ENCODE measurements at regions of chr6 and their contacts with region 1.

Region 1: GRCh38 chr6:132279592-132280139 is 121.6 kb downstream of the MOXD1 start:
- DNase-seq: no peak
- H3K4me3 ChIP-seq: peak overlapping the region; percentile 56
- CTCF ChIP-seq: peak; percentile 62

Region 2: GRCh38 chr6:131923356-131923755 is 356.3 kb before region 1 on chr6:
- CTCF ChIA-PET with region 1: interaction called, 166 read pairs
- POLR2A ChIA-PET with region 1: no interaction called
- DNase-seq: no peak
- H3K4me3 ChIP-seq: no peak overlapping the region
- CTCF ChIP-seq: peak; percentile 48

Region 3: DNA sequence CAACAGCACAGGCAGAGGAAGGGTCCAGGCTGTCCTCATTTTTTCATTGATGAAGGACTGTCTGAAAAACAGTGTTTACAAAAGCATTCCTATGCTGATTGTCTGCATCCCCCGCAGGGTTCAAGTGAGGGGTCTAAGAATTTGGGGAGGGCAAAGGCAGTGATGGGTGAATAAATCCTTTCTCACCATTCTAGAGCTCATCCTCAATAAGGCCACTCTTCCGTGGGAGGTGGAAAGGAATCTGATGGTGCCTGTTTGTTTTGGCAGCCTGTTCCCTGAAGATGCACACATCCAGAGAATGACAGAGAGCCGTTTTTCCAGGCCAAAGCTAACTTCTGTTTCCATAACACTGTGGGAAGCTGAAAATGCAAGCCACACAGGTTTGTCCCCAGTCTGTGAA is 42.9 kb before region 1 on chr6:
- CTCF ChIA-PET with region 1: interaction called, 35 read pairs
- POLR2A ChIA-PET with region 1: no interaction called
- DNase-seq: no peak
- H3K4me3 ChIP-seq: no peak overlapping the region
- CTCF ChIP-seq: no peak

Region 4: DNA sequence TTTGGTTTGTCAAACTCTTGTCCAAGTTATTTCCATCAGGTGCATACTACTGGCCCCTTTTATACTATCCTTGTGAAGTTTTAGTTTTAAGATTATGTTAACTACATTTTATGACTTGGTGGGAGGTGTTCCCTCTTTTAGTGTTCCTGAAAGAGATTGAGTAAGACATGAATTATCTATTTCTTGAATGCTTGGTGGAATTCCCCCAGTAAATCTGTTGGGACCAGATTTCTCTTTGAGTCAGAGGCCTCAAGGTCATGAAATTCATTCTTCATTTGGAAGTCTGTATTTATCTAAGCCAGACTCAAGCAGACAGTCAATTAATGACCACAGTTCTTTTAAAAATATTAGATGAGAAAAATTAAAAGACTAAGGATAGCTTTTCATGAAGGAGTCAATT is 40.3 kb after region 1 on chr6:
- CTCF ChIA-PET with region 1: interaction called, 20 read pairs
- POLR2A ChIA-PET with region 1: no interaction called
- DNase-seq: peak; percentile 52
- H3K4me3 ChIP-seq: no peak overlapping the region
- CTCF ChIP-seq: no peak

Region 5: DNA sequence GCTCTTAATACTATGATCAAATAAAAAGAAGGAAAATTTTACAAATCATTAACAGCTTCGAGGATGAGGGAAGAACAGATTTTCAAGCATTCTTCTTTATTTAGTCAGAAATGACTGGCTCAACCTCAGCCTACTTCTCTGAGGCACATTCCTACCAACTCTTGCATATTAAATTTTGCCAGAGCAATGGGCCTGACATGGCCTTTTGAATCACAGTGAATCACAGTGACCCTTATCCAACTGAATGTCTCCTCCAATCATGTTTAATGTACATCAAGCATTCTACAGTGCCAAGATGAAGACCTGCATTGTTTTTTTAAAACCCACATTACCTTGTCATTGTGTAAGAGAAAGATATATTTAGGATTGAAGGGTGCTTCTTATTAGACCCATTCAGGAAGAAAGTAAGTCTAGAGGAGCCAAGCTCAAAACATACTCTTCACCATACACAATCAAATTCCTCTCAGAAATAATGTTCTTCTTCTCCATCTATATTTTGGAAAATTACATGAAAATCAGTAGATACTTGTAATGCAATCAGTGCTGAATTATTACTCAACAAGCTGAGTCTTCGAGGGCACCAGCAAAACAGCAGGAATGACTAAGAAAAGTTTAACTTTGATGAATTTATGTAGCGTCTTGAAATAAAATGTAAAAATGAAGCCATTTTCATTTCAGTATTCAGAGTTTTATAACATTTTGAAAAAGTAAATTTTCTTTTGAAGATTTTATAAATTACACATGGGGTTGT is 165.7 kb after region 1 on chr6:
- CTCF ChIA-PET with region 1: interaction called, 10 read pairs
- POLR2A ChIA-PET with region 1: no interaction called
- DNase-seq: peak; percentile 55
- H3K4me3 ChIP-seq: no peak overlapping the region
- CTCF ChIP-seq: no peak

Region 6: DNA sequence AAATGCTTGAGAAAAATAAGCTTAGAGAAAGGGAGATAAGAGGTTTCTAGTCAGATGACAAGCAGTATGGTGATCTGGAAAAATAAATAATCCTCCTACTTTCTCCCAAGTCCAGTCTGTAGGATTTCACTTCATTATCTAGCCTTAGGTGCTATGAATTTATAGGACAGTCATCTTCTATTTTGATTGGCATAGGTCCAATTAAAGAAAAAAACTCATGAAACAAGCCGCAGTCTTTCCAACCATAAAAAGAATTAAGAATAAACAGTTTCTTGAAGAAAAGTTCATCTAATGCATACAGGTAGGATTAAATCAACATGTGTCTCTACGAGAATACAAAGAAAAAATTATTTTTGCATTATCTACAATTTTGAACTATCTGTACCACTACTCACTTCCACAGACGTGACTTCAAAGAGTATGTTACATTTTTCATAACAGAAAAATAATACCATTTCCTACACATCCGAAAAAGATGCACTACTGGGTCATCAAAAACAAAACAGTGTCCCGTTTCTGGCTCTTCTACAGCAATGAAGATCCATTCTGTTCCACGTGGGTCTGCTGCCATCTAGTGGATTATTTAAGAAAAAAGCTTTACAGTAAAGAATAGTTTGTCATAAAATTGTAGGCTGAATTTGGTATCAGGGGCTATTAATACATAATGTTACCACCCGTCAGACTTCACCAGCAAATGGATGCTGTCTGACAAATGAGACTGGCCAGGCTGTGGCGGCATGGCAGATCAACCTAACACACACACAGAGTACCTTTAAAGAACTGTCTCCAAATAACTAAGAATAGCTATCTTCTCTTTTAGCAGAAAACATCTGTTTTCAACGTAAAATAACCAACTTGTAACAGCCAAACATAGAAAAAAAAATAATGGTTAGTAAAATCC is 204.4 kb after region 1 on chr6:
- CTCF ChIA-PET with region 1: interaction called, 326 read pairs
- POLR2A ChIA-PET with region 1: no interaction called
- DNase-seq: no peak
- H3K4me3 ChIP-seq: no peak overlapping the region
- CTCF ChIP-seq: peak; percentile 20

Region 7: DNA sequence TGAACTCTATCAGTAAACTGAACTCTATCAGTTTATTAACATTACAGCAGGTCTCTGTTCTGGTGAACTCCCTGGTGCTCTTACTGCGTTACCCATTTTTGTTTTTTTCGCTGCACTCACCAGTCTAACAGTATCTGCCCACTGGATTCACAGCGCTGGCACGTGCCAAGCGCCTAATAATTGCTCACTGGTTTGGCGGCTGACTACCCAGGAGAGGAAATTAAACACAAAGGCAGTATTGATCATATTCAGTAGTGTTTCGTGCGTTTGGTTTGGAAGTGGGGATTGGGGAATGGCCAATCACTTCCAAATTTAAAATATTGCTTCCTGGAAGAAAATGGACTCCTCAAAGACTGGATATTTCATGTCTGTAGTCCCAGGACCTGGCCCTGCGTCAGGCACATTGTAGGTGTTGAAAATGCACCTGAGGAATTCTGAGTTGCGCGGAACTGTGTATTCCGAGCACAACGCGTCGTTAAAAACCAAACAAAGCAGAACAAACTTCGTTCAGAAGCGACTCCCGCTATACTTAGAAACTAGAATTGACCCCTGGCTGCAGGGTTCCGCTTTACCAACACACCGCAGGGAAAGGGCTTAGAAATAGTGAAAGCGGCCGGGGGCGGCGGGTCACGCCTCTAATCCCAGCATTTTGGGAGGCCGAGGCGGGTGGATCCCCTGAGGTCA is 533.6 kb after region 1 on chr6:
- CTCF ChIA-PET with region 1: interaction called, 10 read pairs
- POLR2A ChIA-PET with region 1: no interaction called
- DNase-seq: no peak
- H3K4me3 ChIP-seq: peak overlapping the region; percentile 85
- CTCF ChIP-seq: no peak